B cell (primary cell): ENCODE measurements at regions of chr7 and their contacts with region 1.

Region 1: GRCh38 chr7:24572997-24573625 is at the start of gene PALS2:
- DNase-seq: peak; percentile 90
- ATAC-seq: peak; percentile 79
- H3K4me3 ChIP-seq: peak within 1 kb of the TSS; percentile 63 to 88 (median 84)
- H3K4me3 Mint-ChIP-seq: peak within 1 kb of the TSS; percentile 91
- H3K27ac ChIP-seq: peak within 1 kb of the TSS; percentile 70 to 73
- H3K27ac Mint-ChIP-seq: peak within 1 kb of the TSS; percentile 89
- H3K4me1 ChIP-seq: peaks cover 24 to 29% of the 10 kb centered on the region in 2 donors
- H3K4me1 Mint-ChIP-seq: peaks cover 37% of the 10 kb centered on the region
- H3K27me3 ChIP-seq: peaks cover 0 to 3% (median 0%) of the 10 kb centered on the region in 4 experiments
- H3K27me3 Mint-ChIP-seq: peaks cover 5% of the 10 kb centered on the region
- CTCF ChIP-seq: no peak
- total RNA-seq, gene PALS2: 47.8 and 54.2 TPM in 2 replicates

Region 2: DNA sequence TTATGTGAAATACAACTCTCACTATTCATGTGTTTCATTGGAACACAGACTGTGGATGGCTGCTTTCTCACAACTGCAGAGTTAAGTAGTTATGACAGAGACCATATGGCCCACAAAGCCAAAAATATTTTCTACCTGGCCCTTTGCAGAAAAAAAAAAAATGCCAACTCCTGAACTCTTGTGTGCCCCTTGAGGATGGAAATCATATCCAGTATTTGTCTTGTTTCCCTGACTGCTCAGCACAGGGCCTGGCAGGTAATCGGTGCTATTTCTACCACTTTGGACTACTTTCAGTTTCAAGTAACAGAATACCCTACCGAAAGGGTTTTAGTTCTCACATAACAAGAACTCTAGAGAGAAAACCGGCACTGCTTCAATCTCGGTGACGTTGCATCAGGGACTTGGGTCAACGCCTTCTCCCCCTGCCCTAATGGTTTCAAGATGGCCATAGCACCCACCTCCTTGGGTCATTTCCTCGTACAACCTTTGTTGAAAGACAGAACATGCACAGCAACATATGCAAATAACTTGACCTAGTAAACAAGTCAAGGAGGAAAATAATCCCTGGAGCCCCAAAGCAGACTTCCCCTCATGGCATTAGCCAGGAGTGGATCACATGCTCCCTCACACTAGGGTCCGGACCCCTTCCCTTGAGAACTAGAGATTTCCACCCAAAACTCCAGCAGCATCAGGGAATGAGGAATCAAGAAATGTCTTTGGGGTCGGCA is 1338.4 kb before region 1 on chr7:
- CTCF ChIA-PET with region 1: no interaction called
- POLR2A ChIA-PET with region 1: no interaction called
- intact Hi-C with region 1: no loop called
- DNase-seq: peak; percentile 28
- ATAC-seq: no peak
- H3K4me3 ChIP-seq: peak overlapping the region in 1 of 5 experiments; percentile 29
- H3K4me3 Mint-ChIP-seq: peak overlapping the region; percentile 74
- H3K27ac ChIP-seq: no peak overlapping the region
- H3K27ac Mint-ChIP-seq: peak overlapping the region; percentile 46
- H3K4me1 ChIP-seq: no peaks in the 10 kb centered on the region
- H3K4me1 Mint-ChIP-seq: peaks cover 7% of the 10 kb centered on the region
- H3K27me3 ChIP-seq: no peaks in the 10 kb centered on the region
- H3K27me3 Mint-ChIP-seq: no peaks in the 10 kb centered on the region
- CTCF ChIP-seq: no peak

Region 3: GRCh38 chr7:23679898-23680413 is 893.2 kb before region 1 on chr7 and contains the start of gene FAM221A:
- CTCF ChIA-PET with region 1: no interaction called
- POLR2A ChIA-PET with region 1: no interaction called
- intact Hi-C with region 1: loop called (anchors 10 kb)
- DNase-seq: peak; percentile 89
- ATAC-seq: peak; percentile 99
- H3K4me3 ChIP-seq: peak within 1 kb of the TSS; percentile 51 to 85 (median 75)
- H3K4me3 Mint-ChIP-seq: peak within 1 kb of the TSS; percentile 90
- H3K27ac ChIP-seq: peak within 1 kb of the TSS in 1 of 2 donors; percentile 57
- H3K27ac Mint-ChIP-seq: peak within 1 kb of the TSS; percentile 81
- H3K4me1 ChIP-seq: peaks cover 0 to 15% of the 10 kb centered on the region in 2 donors
- H3K4me1 Mint-ChIP-seq: peaks cover 9% of the 10 kb centered on the region
- H3K27me3 ChIP-seq: no peaks in the 10 kb centered on the region
- H3K27me3 Mint-ChIP-seq: no peaks in the 10 kb centered on the region
- CTCF ChIP-seq: peak; percentile 80
- total RNA-seq, gene FAM221A: 10.7 and 10.8 TPM in 2 replicates

Region 4: GRCh38 chr7:24455813-24456525 is 117.1 kb before region 1 on chr7:
- CTCF ChIA-PET with region 1: no interaction called
- POLR2A ChIA-PET with region 1: no interaction called
- intact Hi-C with region 1: no loop called
- DNase-seq: no peak
- ATAC-seq: no peak
- H3K4me3 ChIP-seq: no peak overlapping the region
- H3K4me3 Mint-ChIP-seq: no peak overlapping the region
- H3K27ac ChIP-seq: no peak overlapping the region
- H3K27ac Mint-ChIP-seq: peak overlapping the region; percentile 20
- H3K4me1 ChIP-seq: peaks cover 4 to 9% of the 10 kb centered on the region in 2 donors
- H3K4me1 Mint-ChIP-seq: peaks cover 9% of the 10 kb centered on the region
- H3K27me3 ChIP-seq: peaks cover 0 to 6% (median 2%) of the 10 kb centered on the region in 4 experiments
- H3K27me3 Mint-ChIP-seq: peaks cover 21% of the 10 kb centered on the region
- CTCF ChIP-seq: no peak

Region 5: GRCh38 chr7:24595671-24596418 is 22.7 kb after region 1 on chr7:
- CTCF ChIA-PET with region 1: interaction called, 12 read pairs
- POLR2A ChIA-PET with region 1: no interaction called
- intact Hi-C with region 1: loop called (anchors 2 kb)
- DNase-seq: peak; percentile 27
- ATAC-seq: peak; percentile 61
- H3K4me3 ChIP-seq: peak overlapping the region in 4 of 5 experiments; percentile 2 to 52 (median 44)
- H3K4me3 Mint-ChIP-seq: no peak overlapping the region
- H3K27ac ChIP-seq: no peak overlapping the region
- H3K27ac Mint-ChIP-seq: no peak overlapping the region
- H3K4me1 ChIP-seq: peaks cover 0 to 3% of the 10 kb centered on the region in 2 donors
- H3K4me1 Mint-ChIP-seq: peaks cover 7% of the 10 kb centered on the region
- H3K27me3 ChIP-seq: no peaks in the 10 kb centered on the region
- H3K27me3 Mint-ChIP-seq: no peaks in the 10 kb centered on the region
- CTCF ChIP-seq: no peak

Region 6: DNA sequence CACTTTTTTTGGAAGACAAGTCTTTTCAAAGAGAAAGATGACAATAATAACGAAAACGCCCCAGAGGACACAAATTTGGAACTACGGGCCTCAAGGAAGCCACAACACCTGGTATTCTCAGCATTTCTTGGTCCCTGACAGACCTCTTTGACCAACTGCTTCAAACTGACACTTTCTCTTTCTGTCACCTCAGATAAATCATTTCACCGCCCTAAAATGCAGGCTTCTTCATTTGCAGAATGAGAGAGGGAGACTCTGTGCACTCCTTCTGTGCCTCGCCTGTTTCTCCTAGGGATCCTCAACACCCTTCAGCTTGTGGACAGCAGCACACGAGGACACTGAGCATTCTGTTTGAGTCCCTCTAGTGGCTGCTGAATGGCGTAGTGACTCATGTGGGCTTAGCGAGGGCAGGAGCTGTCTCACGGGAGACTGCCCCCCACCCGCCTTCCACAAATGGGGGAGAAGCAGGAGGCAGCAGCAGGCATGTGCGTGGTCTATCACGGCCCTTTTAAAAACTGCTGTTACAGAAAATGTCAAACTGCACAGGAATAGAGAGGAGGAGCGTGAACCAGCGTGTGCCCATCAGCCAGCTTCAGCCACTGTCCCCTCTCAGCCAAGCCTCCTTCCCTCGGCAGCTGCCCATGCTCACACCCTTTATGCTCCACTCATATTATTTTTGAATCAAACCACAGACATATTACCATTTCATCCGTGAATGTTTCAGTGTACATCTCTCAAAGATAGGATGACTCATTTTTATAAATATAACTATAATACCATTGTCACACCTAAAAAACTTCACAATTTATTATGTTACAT is 142.8 kb after region 1 on chr7:
- CTCF ChIA-PET with region 1: interaction called, 3 read pairs
- POLR2A ChIA-PET with region 1: no interaction called
- intact Hi-C with region 1: loop called (anchors 2 kb)
- DNase-seq: peak; percentile 56
- ATAC-seq: no peak
- H3K4me3 ChIP-seq: peak overlapping the region in 1 of 5 experiments; percentile 9
- H3K4me3 Mint-ChIP-seq: peak overlapping the region; percentile 68
- H3K27ac ChIP-seq: no peak overlapping the region
- H3K27ac Mint-ChIP-seq: no peak overlapping the region
- H3K4me1 ChIP-seq: peaks cover 52 to 55% of the 10 kb centered on the region in 2 donors
- H3K4me1 Mint-ChIP-seq: peaks cover 61% of the 10 kb centered on the region
- H3K27me3 ChIP-seq: no peaks in the 10 kb centered on the region
- H3K27me3 Mint-ChIP-seq: no peaks in the 10 kb centered on the region
- CTCF ChIP-seq: peak; percentile 56

Region 7: DNA sequence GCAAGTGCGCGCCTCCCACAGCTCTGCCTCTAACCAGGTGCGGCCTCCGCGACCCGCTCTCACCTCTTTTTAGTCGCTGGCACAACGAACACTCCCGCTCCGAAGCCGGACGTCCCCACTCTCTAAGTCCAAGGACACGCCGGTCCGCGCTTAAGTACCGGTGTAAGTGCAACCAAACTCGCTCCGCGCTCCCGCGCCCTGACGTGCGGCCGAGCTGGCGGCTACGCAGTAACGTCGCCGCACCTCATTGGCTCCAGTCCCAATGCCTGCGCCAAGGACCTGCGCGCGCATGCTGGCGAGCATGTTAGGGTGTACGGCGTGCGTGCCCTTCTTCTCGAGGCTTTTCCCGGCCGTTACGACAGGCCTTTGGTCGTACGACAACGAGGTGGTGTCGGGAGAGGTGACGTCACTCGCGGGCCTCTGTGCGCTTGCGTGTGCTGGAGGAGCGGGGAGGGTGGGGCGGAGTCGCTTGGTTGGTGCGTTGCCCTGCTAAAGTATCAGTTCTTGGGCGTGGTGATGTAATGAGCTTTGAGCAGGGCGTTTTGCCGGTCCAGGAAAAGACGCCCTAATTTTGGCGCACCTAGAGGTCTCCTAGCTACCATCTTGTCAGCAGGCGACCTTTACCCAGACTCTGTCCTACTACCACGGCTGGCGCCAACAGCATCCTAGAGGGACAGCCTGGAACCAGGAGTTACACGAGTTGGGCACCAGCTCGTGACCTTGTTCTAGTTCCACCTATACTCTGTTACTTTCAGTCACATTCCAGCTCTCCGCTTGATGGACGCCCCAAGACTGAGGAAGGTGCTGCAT is 552.2 kb after region 1 on chr7 and contains the start of gene CYCS:
- CTCF ChIA-PET with region 1: no interaction called
- POLR2A ChIA-PET with region 1: no interaction called
- intact Hi-C with region 1: loop called (anchors 2 kb)
- DNase-seq: peak; percentile 100
- ATAC-seq: peak; percentile 91
- H3K4me3 ChIP-seq: peak within 1 kb of the TSS; percentile 57 to 94 (median 86)
- H3K4me3 Mint-ChIP-seq: peak within 1 kb of the TSS; percentile 100
- H3K27ac ChIP-seq: peak within 1 kb of the TSS; percentile 96 to 99
- H3K27ac Mint-ChIP-seq: peak within 1 kb of the TSS; percentile 99
- H3K4me1 ChIP-seq: peaks cover 13 to 15% of the 10 kb centered on the region in 2 donors
- H3K4me1 Mint-ChIP-seq: peaks cover 27% of the 10 kb centered on the region
- H3K27me3 ChIP-seq: no peaks in the 10 kb centered on the region
- H3K27me3 Mint-ChIP-seq: no peaks in the 10 kb centered on the region
- CTCF ChIP-seq: no peak
- total RNA-seq, gene CYCS: 48.8 and 51.3 TPM in 2 replicates

Region 8: GRCh38 chr7:25158966-25159365 is 585.9 kb after region 1 on chr7:
- CTCF ChIA-PET with region 1: no interaction called
- POLR2A ChIA-PET with region 1: no interaction called
- intact Hi-C with region 1: no loop called
- DNase-seq: no peak
- ATAC-seq: no peak
- H3K4me3 ChIP-seq: no peak overlapping the region
- H3K4me3 Mint-ChIP-seq: no peak overlapping the region
- H3K27ac ChIP-seq: no peak overlapping the region
- H3K27ac Mint-ChIP-seq: no peak overlapping the region
- H3K4me1 ChIP-seq: no peaks in the 10 kb centered on the region
- H3K4me1 Mint-ChIP-seq: peaks cover 1% of the 10 kb centered on the region
- H3K27me3 ChIP-seq: no peaks in the 10 kb centered on the region
- H3K27me3 Mint-ChIP-seq: no peaks in the 10 kb centered on the region
- CTCF ChIP-seq: no peak

Region 9: DNA sequence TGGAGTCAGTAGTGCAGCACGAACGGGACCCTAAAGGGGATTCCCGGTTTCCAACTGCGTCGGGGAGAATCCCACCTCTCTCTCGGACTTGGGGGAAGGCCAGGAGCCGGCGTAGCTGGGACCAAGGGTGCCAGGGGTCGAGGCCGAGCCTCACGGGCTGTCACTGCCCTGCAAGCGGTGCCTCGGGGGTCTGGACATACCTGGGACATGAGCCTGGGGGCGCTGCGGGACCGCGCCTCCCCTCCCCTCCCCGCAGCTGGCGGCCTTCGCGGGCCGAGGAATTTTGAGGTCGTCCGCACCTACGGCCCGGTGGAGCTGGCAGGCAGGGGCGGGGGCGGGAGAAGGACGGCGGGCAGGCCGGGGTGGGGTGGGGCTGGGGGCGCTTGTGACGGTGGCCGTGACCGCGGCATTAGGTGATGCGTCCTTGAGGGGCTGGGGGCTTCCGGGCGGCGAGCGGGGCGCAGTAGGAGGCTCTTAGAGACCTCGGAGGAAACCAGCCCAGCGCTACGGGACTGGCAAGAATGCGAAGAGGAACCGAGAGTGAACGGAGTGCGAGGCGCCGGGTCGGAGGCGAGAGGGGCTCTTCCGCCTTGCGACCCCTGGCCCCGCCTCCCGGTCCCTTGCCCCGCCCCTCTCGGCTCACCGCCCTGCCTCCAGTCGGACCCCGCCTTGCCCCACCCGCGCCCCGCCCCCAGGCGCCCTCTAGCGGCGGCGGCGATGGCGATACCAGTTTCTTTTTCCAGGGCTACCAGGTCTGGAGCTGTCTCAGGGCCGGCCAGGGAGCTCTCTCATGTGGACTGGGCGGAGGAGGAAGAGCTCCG is 606.9 kb after region 1 on chr7:
- CTCF ChIA-PET with region 1: no interaction called
- POLR2A ChIA-PET with region 1: no interaction called
- intact Hi-C with region 1: loop called (anchors 2 kb)
- DNase-seq: peak; percentile 97
- ATAC-seq: peak; percentile 99
- H3K4me3 ChIP-seq: peak overlapping the region; percentile 44 to 77 (median 74)
- H3K4me3 Mint-ChIP-seq: peak overlapping the region; percentile 90
- H3K27ac ChIP-seq: peak overlapping the region; percentile 92 to 94
- H3K27ac Mint-ChIP-seq: peak overlapping the region; percentile 96
- H3K4me1 ChIP-seq: peaks cover 7 to 15% of the 10 kb centered on the region in 2 donors
- H3K4me1 Mint-ChIP-seq: peaks cover 17% of the 10 kb centered on the region
- H3K27me3 ChIP-seq: peaks cover 0 to 3% (median 0%) of the 10 kb centered on the region in 4 experiments
- H3K27me3 Mint-ChIP-seq: peaks cover 4% of the 10 kb centered on the region
- CTCF ChIP-seq: peak; percentile 87

Region 10: DNA sequence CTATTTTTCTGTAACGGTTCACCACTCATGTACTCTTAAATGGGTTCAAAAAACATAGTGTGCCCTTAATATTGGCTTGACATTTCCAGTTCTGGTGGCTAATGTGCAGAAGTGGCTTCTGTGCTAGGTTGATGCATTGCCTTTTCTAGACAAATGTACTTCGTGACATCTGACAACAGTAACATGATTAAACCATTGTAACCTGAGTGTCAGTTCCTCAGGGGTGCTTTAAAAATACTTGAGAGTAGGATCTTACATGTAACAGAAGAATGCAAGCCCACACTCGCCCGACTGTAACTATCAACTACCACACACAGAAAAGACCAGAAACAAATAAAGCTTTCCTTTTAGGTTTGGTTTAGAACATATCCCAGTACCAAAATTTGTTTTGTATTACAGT is 1185.4 kb after region 1 on chr7:
- CTCF ChIA-PET with region 1: no interaction called
- POLR2A ChIA-PET with region 1: no interaction called
- intact Hi-C with region 1: no loop called
- DNase-seq: no peak
- ATAC-seq: no peak
- H3K4me3 ChIP-seq: no peak overlapping the region
- H3K4me3 Mint-ChIP-seq: no peak overlapping the region
- H3K27ac ChIP-seq: no peak overlapping the region
- H3K27ac Mint-ChIP-seq: no peak overlapping the region
- H3K4me1 ChIP-seq: no peaks in the 10 kb centered on the region
- H3K4me1 Mint-ChIP-seq: no peaks in the 10 kb centered on the region
- H3K27me3 ChIP-seq: peaks cover 0 to 2% (median 0%) of the 10 kb centered on the region in 4 experiments
- H3K27me3 Mint-ChIP-seq: peaks cover 28% of the 10 kb centered on the region
- CTCF ChIP-seq: no peak